Sigmoid colon (tissue), 7 donors: ENCODE measurements at regions of chr2 and their contacts with region 1.

Region 1: GRCh38 chr2:43018179-43019024 is 208.0 kb downstream of the ZFP36L2 start:
- DNase-seq: peak; percentile 98
- H3K4me3 ChIP-seq: no peak overlapping the region
- H3K27ac ChIP-seq: peak overlapping the region; percentile 56 to 75 (median 66)
- H3K4me1 ChIP-seq: peaks cover 0 to 17% (median 13%) of the 10 kb centered on the region in 4 donors
- H3K27me3 ChIP-seq: no peaks in the 10 kb centered on the region
- CTCF ChIP-seq: no peak
- EP300 ChIP-seq: peak in 2 of 4 donors; percentile 30 to 77
- POLR2A ChIP-seq: no peak

Region 2: GRCh38 chr2:43051316-43051715 is 32.9 kb after region 1 on chr2:
- intact Hi-C with region 1: no loop called
- DNase-seq: peak; percentile 37
- H3K4me3 ChIP-seq: no peak overlapping the region
- H3K27ac ChIP-seq: no peak overlapping the region
- H3K4me1 ChIP-seq: peaks cover 0 to 4% (median 4%) of the 10 kb centered on the region in 4 donors
- H3K27me3 ChIP-seq: no peaks in the 10 kb centered on the region
- CTCF ChIP-seq: no peak
- EP300 ChIP-seq: no peak
- POLR2A ChIP-seq: no peak

Region 3: GRCh38 chr2:43083710-43084698 is 65.6 kb after region 1 on chr2:
- intact Hi-C with region 1: loop called (anchors 5 kb)
- DNase-seq: peak; percentile 88
- H3K4me3 ChIP-seq: no peak overlapping the region
- H3K27ac ChIP-seq: peak overlapping the region; percentile 88 to 95 (median 92)
- H3K4me1 ChIP-seq: peaks cover 0 to 87% (median 83%) of the 10 kb centered on the region in 4 donors
- H3K27me3 ChIP-seq: no peaks in the 10 kb centered on the region
- CTCF ChIP-seq: no peak
- EP300 ChIP-seq: peak in 2 of 4 donors; percentile 61 to 77
- POLR2A ChIP-seq: no peak

Region 4: DNA sequence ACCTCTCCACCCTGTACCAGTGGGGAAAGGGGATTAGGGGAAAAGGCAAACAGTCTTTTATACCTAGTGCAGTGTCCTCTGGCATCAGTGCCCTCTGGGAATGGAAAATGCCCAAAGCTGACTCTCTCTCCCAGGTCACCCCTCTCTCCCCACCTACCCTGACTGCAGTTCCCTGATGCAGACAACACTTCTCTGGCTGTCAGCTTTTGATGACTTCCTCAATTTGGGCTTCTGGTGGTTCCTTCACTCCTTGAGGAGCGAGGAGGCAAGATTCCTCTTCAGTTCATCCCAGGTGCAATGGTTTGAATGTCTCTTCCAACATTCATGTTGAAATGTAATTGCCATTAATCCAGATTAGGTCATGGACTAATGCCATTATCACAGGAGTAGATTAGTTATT is 1130.6 kb after region 1 on chr2:
- intact Hi-C with region 1: no loop called
- DNase-seq: no peak
- H3K4me3 ChIP-seq: no peak overlapping the region
- H3K27ac ChIP-seq: no peak overlapping the region
- H3K4me1 ChIP-seq: no peaks in the 10 kb centered on the region
- H3K27me3 ChIP-seq: peaks cover 0 to 5% (median 0%) of the 10 kb centered on the region in 3 donors
- CTCF ChIP-seq: no peak
- EP300 ChIP-seq: no peak
- POLR2A ChIP-seq: no peak